ENCODE measurements at regions of chr7 and their contacts with region 1.

Region 1: DNA sequence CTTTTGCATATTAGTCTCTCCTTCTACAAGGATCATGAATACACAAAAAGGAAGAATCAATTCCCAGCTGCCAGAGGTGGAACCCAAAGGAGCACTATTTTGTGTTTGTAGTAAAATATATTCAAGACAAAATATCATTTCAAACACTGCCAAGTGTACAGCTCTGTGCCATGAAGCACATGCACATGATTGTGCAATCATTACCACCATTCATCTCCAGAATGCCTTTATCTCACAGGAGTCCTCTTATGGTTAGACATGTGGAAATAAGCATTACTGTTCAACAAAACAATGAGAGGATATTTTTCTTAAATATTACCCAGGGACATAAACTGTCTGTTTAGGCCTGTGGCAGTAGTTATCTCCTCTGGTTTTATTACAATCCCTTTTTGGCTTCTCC is 151.4 kb upstream of the PPP1R3A start:
- DNase-seq: no peak
- ATAC-seq: no peak
- H3K4me3 ChIP-seq: no peak overlapping the region
- H3K27ac ChIP-seq: no peak overlapping the region
- H3K4me1 ChIP-seq: no peaks in the 10 kb centered on the region
- H3K27me3 ChIP-seq: no peaks in the 10 kb centered on the region
- CTCF ChIP-seq: no peak

Region 2: DNA sequence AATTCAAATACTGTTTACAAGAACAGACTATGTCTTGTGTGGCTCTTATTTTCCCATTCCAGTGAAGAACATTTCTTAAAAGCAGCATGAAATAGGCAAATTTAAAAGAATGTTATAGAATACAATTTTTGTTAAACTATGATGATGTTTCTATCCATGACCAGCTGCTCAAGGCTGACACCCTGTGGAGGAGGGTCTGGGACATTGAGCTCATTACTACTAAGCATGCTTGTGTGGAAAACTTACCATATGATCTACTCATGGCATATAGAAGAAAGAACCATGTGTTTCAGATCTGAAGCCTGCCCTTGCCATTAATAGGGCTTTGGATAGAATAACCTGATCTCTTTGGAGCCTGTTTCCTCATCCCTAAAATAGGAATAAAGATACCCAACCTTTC is 469.3 kb after region 1 on chr7:
- intact Hi-C with region 1: loop called in 1 of 2 experiments (anchors 10 kb)
- DNase-seq: no peak
- ATAC-seq: peak in 3 of 4 donors; percentile 49 to 62 (median 55)
- H3K4me3 ChIP-seq: no peak overlapping the region
- H3K27ac ChIP-seq: no peak overlapping the region
- H3K4me1 ChIP-seq: no peaks in the 10 kb centered on the region
- H3K27me3 ChIP-seq: no peaks in the 10 kb centered on the region
- CTCF ChIP-seq: peak; percentile 42

Region 3: DNA sequence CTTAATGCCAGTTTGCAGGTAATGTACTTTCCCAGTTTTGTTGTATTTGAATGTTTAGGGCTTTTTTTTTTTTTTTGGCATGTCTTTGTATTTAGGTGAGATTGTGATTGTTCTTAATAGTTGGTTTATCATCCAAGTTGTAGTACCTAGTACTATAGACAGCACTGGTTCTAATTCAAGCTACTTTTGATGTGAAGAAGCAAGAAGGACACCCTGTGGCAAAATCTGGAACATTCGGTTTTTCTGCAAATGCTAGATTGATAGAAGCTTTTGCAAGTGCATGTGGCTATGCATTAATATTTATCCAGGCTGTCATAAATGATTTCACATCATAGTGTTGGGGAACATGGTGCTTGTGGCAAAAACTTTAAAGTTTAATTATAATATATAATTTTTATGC is 593.3 kb after region 1 on chr7:
- intact Hi-C with region 1: loop called in 1 of 2 experiments (anchors 10 kb)
- DNase-seq: no peak
- ATAC-seq: peak in 1 of 4 donors; percentile 63
- H3K4me3 ChIP-seq: no peak overlapping the region
- H3K27ac ChIP-seq: no peak overlapping the region
- H3K4me1 ChIP-seq: no peaks in the 10 kb centered on the region
- H3K27me3 ChIP-seq: no peaks in the 10 kb centered on the region
- CTCF ChIP-seq: no peak